Calu3 (cell line): ENCODE measurements at regions of chr5 and their contacts with region 1.

Region 1: GRCh38 chr5:122076664-122077365 is 1.2 kb downstream of the LOX start:
- DNase-seq: peak; percentile 96
- H3K4me3 Mint-ChIP-seq: peak overlapping the region; percentile 100
- H3K27ac Mint-ChIP-seq: peak overlapping the region; percentile 94
- H3K4me1 Mint-ChIP-seq: peaks cover 26% of the 10 kb centered on the region
- H3K27me3 Mint-ChIP-seq: no peaks in the 10 kb centered on the region
- CTCF ChIP-seq: peak; percentile 85

Region 2: GRCh38 chr5:121962347-121962670 is 114.5 kb before region 1 on chr5:
- CTCF ChIA-PET with region 1: interaction called, 12 read pairs
- intact Hi-C with region 1: no loop called
- DNase-seq: no peak
- H3K4me3 Mint-ChIP-seq: peak overlapping the region; percentile 81
- H3K27ac Mint-ChIP-seq: peak overlapping the region; percentile 95
- H3K4me1 Mint-ChIP-seq: peaks cover 24% of the 10 kb centered on the region
- H3K27me3 Mint-ChIP-seq: no peaks in the 10 kb centered on the region
- CTCF ChIP-seq: no peak

Region 3: GRCh38 chr5:122091936-122092600 is 15.3 kb after region 1 on chr5:
- CTCF ChIA-PET with region 1: interaction called, 11 read pairs
- intact Hi-C with region 1: no loop called
- DNase-seq: no peak
- H3K4me3 Mint-ChIP-seq: no peak overlapping the region
- H3K27ac Mint-ChIP-seq: no peak overlapping the region
- H3K4me1 Mint-ChIP-seq: peaks cover 7% of the 10 kb centered on the region
- H3K27me3 Mint-ChIP-seq: no peaks in the 10 kb centered on the region
- CTCF ChIP-seq: peak; percentile 57

Region 4: DNA sequence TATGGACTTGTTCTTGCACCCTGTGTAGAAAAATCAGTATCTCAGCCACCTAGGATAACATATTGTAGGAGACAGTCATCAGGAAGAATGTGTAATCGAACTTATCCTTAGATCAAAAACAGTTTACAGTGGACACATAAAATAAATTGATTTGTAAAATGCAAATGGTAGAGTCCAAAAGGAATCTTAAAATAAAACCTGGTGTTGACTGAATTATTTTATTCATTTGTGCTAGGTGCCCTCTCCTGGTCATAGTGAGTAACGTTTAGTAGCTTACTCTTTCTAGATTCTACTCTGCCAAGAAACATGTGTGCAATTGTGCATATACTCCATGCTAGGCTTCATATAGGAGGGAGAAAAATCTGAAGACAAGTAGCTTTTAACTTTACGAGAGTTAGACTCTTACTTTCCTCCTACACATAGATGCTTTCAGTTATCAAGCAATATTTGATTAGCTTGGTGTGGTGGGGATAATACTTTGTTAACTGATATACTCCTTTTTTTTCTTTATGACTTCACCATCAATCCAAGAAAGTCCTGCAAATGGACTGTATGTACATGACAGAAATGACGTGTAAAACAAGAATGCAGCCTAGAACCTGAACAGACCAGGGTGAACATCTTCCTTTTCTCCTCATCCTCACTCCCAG is 24.9 kb after region 1 on chr5:
- CTCF ChIA-PET with region 1: interaction called, 15 read pairs
- intact Hi-C with region 1: no loop called
- DNase-seq: peak; percentile 13
- H3K4me3 Mint-ChIP-seq: no peak overlapping the region
- H3K27ac Mint-ChIP-seq: no peak overlapping the region
- H3K4me1 Mint-ChIP-seq: peaks cover 25% of the 10 kb centered on the region
- H3K27me3 Mint-ChIP-seq: no peaks in the 10 kb centered on the region
- CTCF ChIP-seq: peak; percentile 70

Region 5: DNA sequence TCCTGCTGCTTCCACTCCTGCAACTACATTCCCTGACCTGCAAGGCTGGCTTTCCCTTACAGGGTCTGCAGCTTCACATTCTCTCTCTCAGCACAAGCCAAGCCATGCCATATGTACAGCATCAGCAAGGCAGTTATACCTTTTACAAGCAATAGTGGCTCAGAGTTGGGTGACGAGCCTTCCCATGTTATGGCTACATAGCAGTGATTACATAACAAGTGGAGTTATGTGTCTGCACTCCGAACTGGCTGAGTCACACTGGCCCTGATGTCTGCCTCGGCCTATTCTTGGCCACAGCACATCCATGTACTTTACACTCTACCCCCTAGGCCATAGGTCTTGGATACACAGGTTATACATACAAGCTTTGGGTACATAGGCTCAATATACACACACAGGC is 183.2 kb after region 1 on chr5:
- CTCF ChIA-PET with region 1: no interaction called
- intact Hi-C with region 1: no loop called
- DNase-seq: peak; percentile 24
- H3K4me3 Mint-ChIP-seq: no peak overlapping the region
- H3K27ac Mint-ChIP-seq: no peak overlapping the region
- H3K4me1 Mint-ChIP-seq: no peaks in the 10 kb centered on the region
- H3K27me3 Mint-ChIP-seq: no peaks in the 10 kb centered on the region
- CTCF ChIP-seq: no peak